Spleen (tissue), 13 donors: ENCODE measurements at regions of chr1 and their contacts with region 1.

Region 1: DNA sequence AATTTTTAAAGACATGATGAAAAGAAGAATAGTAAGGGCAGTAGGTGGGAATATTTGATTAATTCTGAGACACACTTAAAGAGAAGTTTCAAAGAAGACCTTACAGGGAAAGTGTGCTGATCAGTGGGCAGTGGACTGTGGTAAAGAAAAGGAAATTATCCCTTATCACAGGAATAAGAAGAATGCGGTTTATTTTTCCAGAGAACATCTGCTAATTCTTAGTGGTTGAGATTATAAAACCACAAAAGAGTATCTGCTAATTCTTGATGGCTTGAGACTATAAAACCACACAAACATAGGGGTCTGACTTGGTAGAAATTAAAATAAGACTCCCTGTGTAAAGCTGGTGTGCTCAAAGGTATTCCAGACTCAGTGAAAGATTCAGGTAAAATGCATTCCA is 60.0 kb upstream of the KCTD3 start:
- DNase-seq: no peak
- H3K4me3 ChIP-seq: no peak overlapping the region
- H3K27ac ChIP-seq: no peak overlapping the region
- H3K4me1 ChIP-seq: no peaks in the 10 kb centered on the region
- H3K27me3 ChIP-seq: no peaks in the 10 kb centered on the region
- CTCF ChIP-seq: no peak
- POLR2A ChIP-seq: no peak

Region 2: DNA sequence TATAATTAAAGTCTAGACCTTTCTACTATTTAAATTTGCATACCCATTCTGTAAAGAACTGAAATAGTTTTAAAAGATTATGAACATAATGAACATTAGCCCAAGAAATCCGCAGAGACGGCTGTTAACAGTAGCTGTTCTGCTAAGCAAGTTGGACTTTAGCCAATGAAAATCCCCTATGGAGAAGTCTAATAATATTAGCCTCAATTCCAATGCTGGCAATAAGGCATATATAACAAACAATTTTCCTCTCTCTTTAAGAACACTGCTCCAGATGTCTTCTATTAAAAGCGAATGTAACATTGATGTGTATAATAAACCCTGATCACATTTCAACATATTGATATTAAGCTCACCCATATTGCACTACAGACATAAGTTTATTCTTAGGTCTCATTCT is 161.4 kb before region 1 on chr1:
- intact Hi-C with region 1: loop called (anchors 10 kb)
- DNase-seq: no peak
- H3K4me3 ChIP-seq: no peak overlapping the region
- H3K27ac ChIP-seq: no peak overlapping the region
- H3K4me1 ChIP-seq: no peaks in the 10 kb centered on the region
- H3K27me3 ChIP-seq: no peaks in the 10 kb centered on the region
- CTCF ChIP-seq: no peak
- POLR2A ChIP-seq: no peak

Region 3: GRCh38 chr1:215444715-215445414 is 62.3 kb before region 1 on chr1:
- intact Hi-C with region 1: no loop called
- DNase-seq: peak; percentile 58
- H3K4me3 ChIP-seq: no peak overlapping the region
- H3K27ac ChIP-seq: no peak overlapping the region
- H3K4me1 ChIP-seq: no peaks in the 10 kb centered on the region
- H3K27me3 ChIP-seq: no peaks in the 10 kb centered on the region
- CTCF ChIP-seq: no peak
- POLR2A ChIP-seq: no peak

Region 4: DNA sequence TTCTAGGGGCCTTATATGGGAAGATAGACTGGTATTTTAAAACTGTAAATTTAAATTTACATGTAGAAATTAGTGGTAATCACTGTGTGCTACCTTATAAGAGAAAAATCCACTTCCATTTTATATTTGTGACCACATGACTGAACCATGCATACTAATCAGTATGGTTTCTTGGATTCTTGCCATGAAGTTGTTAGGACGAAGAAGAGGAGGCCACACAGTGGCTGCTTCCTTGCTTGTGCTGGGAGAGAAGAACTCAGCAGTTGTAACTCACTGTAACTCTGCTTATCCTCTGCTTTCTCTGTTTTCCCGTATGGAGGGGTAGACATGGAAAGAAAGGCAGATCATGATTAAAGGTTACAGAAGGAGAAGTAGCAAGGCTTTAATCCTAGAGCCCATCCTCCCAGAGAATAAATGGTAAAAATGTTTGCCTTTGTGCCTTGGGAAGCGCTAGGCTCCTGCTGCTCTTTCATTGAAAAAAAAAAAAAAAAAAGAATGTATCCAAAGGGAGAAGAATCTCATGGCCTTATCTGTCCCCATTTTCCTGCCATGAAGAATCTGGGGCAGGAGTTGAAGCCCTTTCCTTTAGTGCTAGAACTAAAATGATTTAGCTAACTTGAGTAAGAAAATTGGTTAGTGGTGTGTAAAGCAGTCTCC is 92.4 kb after region 1 on chr1:
- intact Hi-C with region 1: no loop called
- DNase-seq: no peak
- H3K4me3 ChIP-seq: no peak overlapping the region
- H3K27ac ChIP-seq: no peak overlapping the region
- H3K4me1 ChIP-seq: no peaks in the 10 kb centered on the region
- H3K27me3 ChIP-seq: no peaks in the 10 kb centered on the region
- CTCF ChIP-seq: no peak
- POLR2A ChIP-seq: no peak

Region 5: GRCh38 chr1:215617979-215618378 is 110.9 kb after region 1 on chr1:
- intact Hi-C with region 1: no loop called
- DNase-seq: no peak
- H3K4me3 ChIP-seq: no peak overlapping the region
- H3K27ac ChIP-seq: peak overlapping the region in 2 of 8 donors; percentile 13 to 37
- H3K4me1 ChIP-seq: peaks cover 0 to 5% (median 0%) of the 10 kb centered on the region in 6 donors
- H3K27me3 ChIP-seq: no peaks in the 10 kb centered on the region
- CTCF ChIP-seq: no peak
- POLR2A ChIP-seq: no peak